Psoas muscle (tissue), 8 donors: ENCODE measurements at regions of chr20 and their contacts with region 1.

Region 1: DNA sequence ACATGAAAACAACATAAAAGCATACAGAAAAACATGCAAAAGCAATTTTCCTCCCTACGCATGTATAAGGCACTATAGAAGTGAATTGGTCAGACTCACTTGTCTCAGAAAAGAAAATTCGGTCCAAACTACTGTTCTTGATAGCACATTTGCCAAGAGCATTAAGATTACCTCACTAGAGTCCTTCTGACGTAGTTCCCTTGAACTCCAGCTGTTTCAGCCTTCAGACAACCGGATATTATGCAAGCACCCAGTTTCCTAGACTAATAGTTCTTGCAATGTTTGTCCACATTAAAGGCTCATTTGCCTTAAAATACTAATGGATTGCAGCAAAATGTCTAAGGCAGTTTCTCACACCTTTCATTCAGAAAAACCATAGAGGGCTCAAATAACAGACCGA is 2.5 kb upstream of the CASS4 start:
- DNase-seq: no peak
- ATAC-seq: no peak
- H3K4me3 ChIP-seq: no peak overlapping the region
- H3K27ac ChIP-seq: no peak overlapping the region
- H3K4me1 ChIP-seq: no peaks in the 10 kb centered on the region
- H3K27me3 ChIP-seq: no peaks in the 10 kb centered on the region
- CTCF ChIP-seq: no peak

Region 2: DNA sequence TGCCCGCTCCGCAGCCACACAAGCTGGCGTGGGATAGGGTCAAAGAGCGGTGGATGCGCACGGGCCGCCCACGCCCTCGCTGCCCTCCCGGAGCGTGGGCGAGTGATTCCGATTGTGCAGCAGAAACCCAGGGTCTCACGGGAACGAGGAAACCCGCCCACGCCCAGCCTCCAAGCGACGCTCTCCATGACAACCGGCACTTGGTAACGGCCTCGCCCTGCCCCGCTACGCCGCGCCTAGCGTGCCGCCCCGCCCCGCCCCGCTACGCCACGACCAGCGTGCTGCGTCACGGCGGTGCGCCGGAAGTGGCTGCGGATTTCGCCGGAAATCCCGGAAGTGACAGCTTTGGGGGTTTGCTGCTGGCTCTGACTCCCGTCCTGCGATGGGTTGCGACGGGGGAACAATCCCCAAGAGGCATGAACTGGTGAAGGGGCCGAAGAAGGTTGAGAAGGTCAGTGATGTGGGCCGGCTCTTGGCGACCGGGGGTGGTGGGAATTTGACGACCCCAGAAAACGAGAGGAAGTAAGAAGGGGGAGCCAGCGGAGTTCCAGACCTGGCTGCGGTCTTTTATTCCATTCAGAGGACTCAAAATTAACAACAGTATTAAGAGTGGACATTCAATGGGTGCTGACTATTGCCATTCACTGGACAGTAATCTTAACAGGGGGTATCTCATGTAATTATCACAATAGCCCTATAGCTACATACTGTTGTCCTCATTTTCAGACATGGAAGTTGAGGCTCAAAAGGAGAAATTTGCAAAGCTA is 59.0 kb after region 1 on chr20 and contains the start of gene RTF2:
- intact Hi-C with region 1: loop called in 1 of 2 experiments (anchors 5 kb)
- DNase-seq: peak; percentile 95 to 97
- ATAC-seq: peak; percentile 100
- H3K4me3 ChIP-seq: peak within 1 kb of the TSS; percentile 71
- H3K27ac ChIP-seq: peak within 1 kb of the TSS; percentile 82
- H3K4me1 ChIP-seq: peaks cover 14% of the 10 kb centered on the region
- H3K27me3 ChIP-seq: no peaks in the 10 kb centered on the region
- CTCF ChIP-seq: no peak
- total RNA-seq, gene RTF2: 89.0 to 93.0 (median 90.5) TPM